Activated CD4-positive, alpha-beta T cell treated with anti-CD3 and anti-CD28 coated beads, Interleukin-2, amount 10 ng/mL, durations not matched to agents 24 days and 14 days (primary cell): ENCODE measurements at regions of chr10 and their contacts with region 1.

Region 1: GRCh38 chr10:69045441-69046300 is 42.2 kb upstream of the SRGN start:
- DNase-seq: peak; percentile 83
- H3K4me3 Mint-ChIP-seq: peak overlapping the region; percentile 73
- H3K27ac Mint-ChIP-seq: peak overlapping the region; percentile 99
- H3K4me1 Mint-ChIP-seq: peaks cover 43% of the 10 kb centered on the region
- H3K27me3 Mint-ChIP-seq: no peaks in the 10 kb centered on the region

Region 2: GRCh38 chr10:68997211-68997610 is 48.5 kb before region 1 on chr10:
- intact Hi-C with region 1: loop called (anchors 1 kb)
- DNase-seq: no peak
- H3K4me3 Mint-ChIP-seq: peak overlapping the region; percentile 59
- H3K27ac Mint-ChIP-seq: peak overlapping the region; percentile 93
- H3K4me1 Mint-ChIP-seq: peaks cover 25% of the 10 kb centered on the region
- H3K27me3 Mint-ChIP-seq: no peaks in the 10 kb centered on the region

Region 3: DNA sequence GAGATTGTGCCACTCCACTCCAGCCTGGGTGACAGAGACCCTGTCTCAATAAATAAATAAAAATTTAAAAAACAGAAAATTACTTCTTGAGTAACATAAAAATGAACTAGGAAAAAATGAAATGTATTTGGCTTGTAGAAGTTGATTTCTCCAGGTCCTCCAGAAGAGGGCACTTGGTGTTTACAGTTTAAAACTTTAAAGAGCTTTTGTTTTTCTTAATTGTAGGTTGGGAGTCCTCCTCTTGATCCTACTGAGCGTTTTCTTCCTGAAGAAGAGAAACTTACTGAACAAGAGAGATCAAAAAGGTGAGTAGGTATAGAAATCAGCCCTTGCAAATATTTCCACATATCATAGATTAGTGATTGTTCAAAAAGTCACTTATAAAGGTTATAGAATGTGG is 40.9 kb before region 1 on chr10:
- intact Hi-C with region 1: loop called (anchors 2 kb)
- DNase-seq: peak; percentile 66
- H3K4me3 Mint-ChIP-seq: no peak overlapping the region
- H3K27ac Mint-ChIP-seq: no peak overlapping the region
- H3K4me1 Mint-ChIP-seq: peaks cover 2% of the 10 kb centered on the region
- H3K27me3 Mint-ChIP-seq: no peaks in the 10 kb centered on the region

Region 4: GRCh38 chr10:69033256-69033655 is 12.4 kb before region 1 on chr10:
- intact Hi-C with region 1: loop called (anchors 2 kb)
- DNase-seq: no peak
- H3K4me3 Mint-ChIP-seq: no peak overlapping the region
- H3K27ac Mint-ChIP-seq: no peak overlapping the region
- H3K4me1 Mint-ChIP-seq: peaks cover 2% of the 10 kb centered on the region
- H3K27me3 Mint-ChIP-seq: no peaks in the 10 kb centered on the region

Region 5: DNA sequence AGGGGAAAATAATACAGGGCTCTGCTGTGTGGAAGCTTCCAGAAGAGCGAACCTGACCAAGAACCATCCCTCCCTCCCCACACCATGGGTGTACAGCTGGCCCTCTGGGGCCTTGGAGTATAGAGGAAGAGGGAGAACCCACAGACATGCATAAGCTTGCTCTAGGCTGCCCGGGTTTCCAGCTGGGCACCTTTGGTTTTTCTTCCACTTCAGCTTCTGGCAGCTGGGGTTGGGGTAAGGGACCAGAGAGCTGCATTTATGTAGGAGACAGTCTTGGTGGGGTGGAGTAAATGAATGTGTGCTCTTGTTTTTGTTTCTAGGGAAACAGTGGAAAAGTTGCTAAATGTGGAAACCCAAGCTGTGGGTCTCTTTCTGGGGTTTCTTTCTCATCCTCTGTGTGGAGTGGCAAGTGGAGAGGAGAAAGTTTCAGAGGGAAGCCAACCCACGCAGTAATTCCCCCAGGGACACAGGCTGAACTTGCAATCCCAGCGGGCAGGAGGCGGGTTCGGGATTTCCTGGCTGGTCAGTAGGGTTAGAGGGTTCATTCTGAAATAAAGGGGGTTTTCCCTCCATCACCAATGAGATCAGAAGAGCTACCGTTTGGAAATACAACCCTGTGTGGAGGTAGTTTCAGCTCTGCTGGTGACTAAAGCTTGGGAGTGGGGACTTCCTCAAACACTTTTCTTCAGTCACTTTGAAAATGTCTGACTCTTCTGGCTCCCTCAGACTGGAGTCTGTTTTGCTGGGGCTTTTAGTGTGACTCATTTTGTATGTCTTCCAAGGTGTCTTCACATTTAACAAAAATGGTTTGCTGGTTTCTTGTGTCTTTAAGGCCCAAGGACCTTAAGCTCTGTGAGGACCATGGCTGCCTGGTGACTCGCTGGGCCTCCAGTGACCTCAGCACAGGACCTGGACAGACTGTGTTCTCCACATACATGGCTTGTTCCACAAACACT is 20.0 kb after region 1 on chr10:
- intact Hi-C with region 1: loop called (anchors 1 kb)
- DNase-seq: peak; percentile 79
- H3K4me3 Mint-ChIP-seq: peak overlapping the region; percentile 82
- H3K27ac Mint-ChIP-seq: peak overlapping the region; percentile 99
- H3K4me1 Mint-ChIP-seq: peaks cover 40% of the 10 kb centered on the region
- H3K27me3 Mint-ChIP-seq: no peaks in the 10 kb centered on the region

Region 6: GRCh38 chr10:69107699-69108098 is 62.0 kb after region 1 on chr10:
- intact Hi-C with region 1: no loop called
- DNase-seq: no peak
- H3K4me3 Mint-ChIP-seq: no peak overlapping the region
- H3K27ac Mint-ChIP-seq: no peak overlapping the region
- H3K4me1 Mint-ChIP-seq: peaks cover 10% of the 10 kb centered on the region
- H3K27me3 Mint-ChIP-seq: no peaks in the 10 kb centered on the region